Activated CD4-positive, alpha-beta T cell treated with anti-CD3 and anti-CD28 coated beads, Interleukin-2, amount 10 ng/mL, durations not matched to agents 24 days and 14 days (primary cell): ENCODE measurements at regions of chr6 and their contacts with region 1.

Region 1: DNA sequence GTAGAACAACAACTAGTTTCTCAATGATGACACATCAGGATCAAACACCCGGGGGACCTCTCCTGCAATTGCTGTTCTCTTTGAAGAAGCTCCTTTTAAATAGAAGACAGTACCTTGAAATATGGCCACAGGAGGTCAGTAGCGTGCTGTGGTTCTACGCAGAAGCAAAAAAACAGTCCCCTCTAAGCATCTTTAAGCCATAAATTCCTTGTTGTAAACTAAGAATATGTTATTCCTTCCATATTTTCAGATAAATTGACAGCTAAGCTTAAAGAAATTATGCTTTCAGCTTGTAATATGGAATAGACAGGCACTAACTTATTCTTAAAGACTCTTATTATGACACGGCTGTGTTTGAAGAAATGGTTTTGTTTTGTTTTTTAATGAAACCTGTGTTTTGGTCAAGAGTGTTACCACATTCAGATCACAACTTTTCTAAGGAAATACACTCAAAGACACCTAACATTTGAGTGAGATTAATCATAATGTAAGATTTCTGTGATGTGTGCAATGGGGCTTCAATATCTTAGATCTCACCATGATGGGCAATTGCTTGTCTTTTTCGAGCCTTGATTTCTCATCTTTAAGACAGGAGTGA is 49.7 kb upstream of the IL20RA start:
- DNase-seq: peak; percentile 87
- H3K4me3 Mint-ChIP-seq: no peak overlapping the region
- H3K27ac Mint-ChIP-seq: peak overlapping the region; percentile 47
- H3K4me1 Mint-ChIP-seq: peaks cover 32% of the 10 kb centered on the region
- H3K27me3 Mint-ChIP-seq: no peaks in the 10 kb centered on the region

Region 2: DNA sequence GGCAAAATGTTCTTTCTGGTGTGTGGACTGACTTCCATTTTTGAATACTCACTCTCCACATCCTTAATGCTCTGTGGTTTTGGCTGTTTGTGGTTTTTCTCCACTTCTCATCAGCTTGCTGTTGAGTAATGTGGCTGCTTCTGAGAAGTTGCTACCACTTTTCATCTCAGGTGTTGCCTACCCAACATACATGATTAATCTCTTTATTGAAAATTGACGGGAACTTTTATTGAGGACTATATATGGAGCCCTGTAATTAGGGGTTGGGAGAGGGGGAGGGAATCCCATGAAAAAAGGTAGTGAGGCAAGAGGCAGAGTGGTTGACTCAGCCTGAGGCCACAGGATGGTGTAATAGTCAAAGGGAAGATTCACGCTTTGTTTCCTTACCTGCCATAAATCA is 61.3 kb after region 1 on chr6:
- intact Hi-C with region 1: loop called (anchors 2 kb)
- DNase-seq: peak; percentile 90
- H3K4me3 Mint-ChIP-seq: peak overlapping the region; percentile 66
- H3K27ac Mint-ChIP-seq: peak overlapping the region; percentile 73
- H3K4me1 Mint-ChIP-seq: peaks cover 24% of the 10 kb centered on the region
- H3K27me3 Mint-ChIP-seq: peaks cover 2% of the 10 kb centered on the region

Region 3: GRCh38 chr6:137218917-137219663 is 124.6 kb after region 1 on chr6 and contains the start of gene IFNGR1:
- intact Hi-C with region 1: loop called (anchors 1 kb)
- DNase-seq: peak; percentile 99
- H3K4me3 Mint-ChIP-seq: peak within 1 kb of the TSS; percentile 99
- H3K27ac Mint-ChIP-seq: peak within 1 kb of the TSS; percentile 98
- H3K4me1 Mint-ChIP-seq: peaks cover 45% of the 10 kb centered on the region
- H3K27me3 Mint-ChIP-seq: no peaks in the 10 kb centered on the region
- total RNA-seq, gene IFNGR1: 13.9 and 14.4 TPM in 2 replicates

Region 4: DNA sequence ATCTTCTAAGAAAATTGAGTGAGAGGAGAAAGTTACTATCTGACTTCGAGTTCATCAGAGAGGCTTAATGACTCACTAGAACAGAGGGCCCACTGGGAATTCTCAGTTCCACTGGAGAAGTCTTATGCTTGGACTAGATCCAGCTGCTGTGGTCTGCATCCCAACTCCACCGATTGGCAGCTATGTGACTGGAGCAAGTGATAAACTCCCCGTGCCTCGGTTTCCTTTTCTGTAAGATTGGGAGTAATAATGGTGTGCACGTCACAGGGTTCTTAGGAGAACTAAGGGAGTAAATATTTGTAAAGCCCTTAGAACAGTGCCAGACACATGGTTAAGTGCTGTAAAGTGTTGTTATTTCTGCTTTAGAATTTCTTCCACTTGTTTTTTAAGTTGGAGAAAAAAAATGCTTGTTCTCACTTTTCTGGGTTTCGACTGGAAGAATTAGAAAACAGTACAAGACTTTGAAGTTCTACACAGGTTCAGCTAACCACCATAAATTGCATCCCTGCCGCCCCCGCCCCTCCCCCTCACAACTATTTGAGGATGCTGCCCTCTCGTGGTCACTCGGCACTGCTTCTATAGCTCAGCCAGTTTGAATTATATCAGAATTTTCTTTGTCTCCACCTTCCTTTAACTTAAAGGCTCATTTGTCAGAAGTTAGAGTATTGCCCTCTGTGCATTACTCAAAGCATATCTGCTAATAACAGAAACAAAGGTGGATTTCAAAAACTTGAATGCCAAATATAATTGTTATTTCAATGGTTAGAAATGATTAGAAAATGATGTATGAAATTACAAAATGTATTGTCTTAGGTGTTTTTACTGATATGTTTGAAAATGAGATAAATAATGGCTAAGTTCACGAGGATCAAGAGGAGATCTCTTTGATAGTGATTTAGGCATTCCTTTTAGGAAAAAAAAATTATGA is 219.7 kb after region 1 on chr6:
- intact Hi-C with region 1: loop called (anchors 1 kb)
- DNase-seq: peak; percentile 84
- H3K4me3 Mint-ChIP-seq: no peak overlapping the region
- H3K27ac Mint-ChIP-seq: no peak overlapping the region
- H3K4me1 Mint-ChIP-seq: peaks cover 7% of the 10 kb centered on the region
- H3K27me3 Mint-ChIP-seq: peaks cover 21% of the 10 kb centered on the region

Region 5: GRCh38 chr6:137641474-137642077 is 547.1 kb after region 1 on chr6:
- intact Hi-C with region 1: loop called (anchors 2 kb)
- DNase-seq: peak; percentile 89
- H3K4me3 Mint-ChIP-seq: no peak overlapping the region
- H3K27ac Mint-ChIP-seq: no peak overlapping the region
- H3K4me1 Mint-ChIP-seq: peaks cover 13% of the 10 kb centered on the region
- H3K27me3 Mint-ChIP-seq: peaks cover 9% of the 10 kb centered on the region